ENCODE measurements at regions of chr11 and their contacts with region 1.

Region 1: GRCh38 chr11:112086422-112087191 is at the starts of genes SDHD and TIMM8B:
- DNase-seq: peak; percentile 93 to 98 (median 94)
- ATAC-seq: peak; percentile 94
- H3K4me3 ChIP-seq: peak within 1 kb of the TSS; percentile 84
- H3K27ac ChIP-seq: peak within 1 kb of the TSS; percentile 84
- H3K4me1 ChIP-seq: peaks cover 0 to 19% of the 10 kb centered on the region in 2 experiments; a peak in 3 of 5 replicates
- H3K27me3 ChIP-seq: no peaks in the 10 kb centered on the region
- CTCF ChIP-seq: peak; percentile 34 to 49 (median 38); a peak in 4 of 6 replicates
- EP300 ChIP-seq: peak; percentile 6; the same call in 1 of the 2 replicates
- POLR2A ChIP-seq: peak; percentile 95
- RAD21 ChIP-seq: no peak
- polyA plus RNA-seq, gene SDHD: 1,105 to 1,225 TPM
- polyA plus RNA-seq, gene TIMM8B: 325 to 338 TPM

Region 2: DNA sequence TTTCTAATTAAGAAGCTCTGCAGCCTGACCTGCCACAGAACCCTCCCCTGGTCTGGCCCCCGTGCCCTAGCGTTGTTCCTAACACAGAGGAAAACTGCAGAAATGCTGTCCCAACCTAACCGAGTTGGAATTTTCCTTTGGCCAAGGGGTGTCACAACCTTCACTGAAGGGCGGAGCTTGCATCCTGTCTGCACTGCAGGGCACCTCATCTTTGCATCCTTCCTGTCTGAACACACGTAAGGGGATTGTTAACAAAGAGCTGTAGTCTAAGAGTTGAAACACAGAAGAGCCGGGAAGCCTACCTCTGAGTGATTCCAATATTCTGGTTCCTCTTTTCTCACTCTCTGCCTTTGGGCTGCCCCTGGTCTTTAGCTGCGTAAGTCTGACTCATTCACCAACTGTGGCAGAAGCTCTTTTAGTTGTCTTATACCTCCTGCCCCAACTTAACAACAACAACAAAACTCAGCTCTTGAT is 147.9 kb before region 1 on chr11:
- CTCF ChIA-PET with region 1: no interaction called
- POLR2A ChIA-PET with region 1: no interaction called
- in situ Hi-C with region 1: no loop called
- intact Hi-C with region 1: loop called (anchors 5 kb)
- DNase-seq: peak in 2 of 4 experiments; percentile 32 to 56
- ATAC-seq: peak; percentile 52
- H3K4me3 ChIP-seq: no peak overlapping the region
- H3K27ac ChIP-seq: peak overlapping the region; percentile 62; the same call in 2 of the 3 replicates
- H3K4me1 ChIP-seq: peaks cover 22 to 31% of the 10 kb centered on the region in 2 experiments
- H3K27me3 ChIP-seq: no peaks in the 10 kb centered on the region
- CTCF ChIP-seq: no peak
- EP300 ChIP-seq: no peak
- POLR2A ChIP-seq: no peak
- RAD21 ChIP-seq: no peak